Posterior vena cava (tissue), 2 donors: ENCODE measurements at regions of chr1 and their contacts with region 1.

Region 1: DNA sequence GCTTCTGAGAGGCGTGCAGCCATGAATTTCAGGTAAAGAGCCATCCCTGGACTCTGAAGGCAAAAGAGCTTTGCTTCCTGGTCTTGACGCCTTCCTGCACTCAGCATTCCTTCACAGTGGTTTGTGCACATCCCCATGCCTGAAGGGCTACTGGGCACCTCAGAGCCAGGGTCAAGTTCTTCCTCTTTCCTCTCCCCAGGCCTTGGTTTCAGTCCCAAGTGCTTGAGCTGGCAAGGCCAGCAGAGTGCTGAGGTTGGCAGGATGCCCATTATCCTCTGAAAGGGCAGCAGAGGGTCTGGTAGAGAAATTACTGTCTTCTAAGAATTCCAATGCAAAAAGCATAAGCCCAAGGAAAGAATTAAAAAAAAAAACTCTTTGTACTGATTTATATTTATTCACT is 1064.9 kb downstream of the TTLL7 start:
- DNase-seq: no peak

Region 2: GRCh38 chr1:82889089-82889488 is 45.0 kb before region 1 on chr1:
- intact Hi-C with region 1: no loop called
- DNase-seq: no peak

Region 3: GRCh38 chr1:82903626-82904025 is 30.4 kb before region 1 on chr1:
- intact Hi-C with region 1: loop called in 1 of 2 experiments (anchors 2 kb)
- DNase-seq: no peak

Region 4: GRCh38 chr1:84412316-84412942 is 1478.4 kb after region 1 on chr1:
- intact Hi-C with region 1: no loop called
- DNase-seq: no peak